GM12878 (cell line): ENCODE measurements at regions of chr3 and their contacts with region 1.

Region 1: GRCh38 chr3:100463002-100463401 is 29.4 kb upstream of the TMEM45A start:
- DNase-seq: peak; percentile 35
- ATAC-seq: peak; percentile 95
- H3K4me3 ChIP-seq: no peak overlapping the region
- H3K27ac ChIP-seq: no peak overlapping the region
- H3K4me1 ChIP-seq: peaks cover 10% of the 10 kb centered on the region
- H3K27me3 ChIP-seq: no peaks in the 10 kb centered on the region
- CTCF ChIP-seq: peak; percentile 65 to 78 (median 71); a peak in 5 of 6 replicates
- EP300 ChIP-seq: no peak
- POLR2A ChIP-seq: no peak
- RAD21 ChIP-seq: peak; percentile 99

Region 2: DNA sequence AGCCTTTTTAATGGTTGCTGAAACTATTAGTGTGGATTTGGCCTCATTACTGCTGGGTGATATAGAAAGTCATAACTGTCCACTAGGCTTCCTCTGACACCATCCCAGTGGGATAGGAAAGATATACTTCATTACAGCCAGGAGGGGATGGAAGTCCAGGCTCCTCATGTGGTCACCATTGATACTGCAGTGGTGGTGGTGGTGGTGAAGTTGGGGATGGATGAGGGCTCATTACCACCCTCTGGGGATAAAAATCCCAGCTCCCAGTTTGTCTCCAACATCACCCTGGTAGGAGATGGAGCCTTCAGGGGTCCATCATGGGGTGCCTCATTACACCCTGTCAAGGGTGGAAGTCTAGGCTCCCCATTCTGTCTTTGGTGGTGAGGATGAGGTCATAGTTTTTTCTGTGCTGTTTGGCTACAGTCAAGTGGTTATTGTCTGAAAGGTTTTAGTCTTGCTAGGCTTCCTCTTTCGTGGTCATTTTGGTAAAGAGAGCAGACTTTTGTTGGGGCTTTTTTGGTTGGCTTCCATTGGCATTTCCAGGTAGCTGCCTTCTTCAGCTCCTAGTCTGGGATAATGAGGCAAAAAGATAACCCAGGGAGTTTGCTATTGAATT is 318.6 kb before region 1 on chr3:
- CTCF ChIA-PET with region 1: no interaction called
- POLR2A ChIA-PET with region 1: no interaction called
- RAD21 ChIA-PET with region 1: no interaction called
- SMC1A ChIA-PET with region 1: no interaction called
- in situ Hi-C with region 1: no loop called
- intact Hi-C with region 1: no loop called
- DNase-seq: peak; percentile 4
- ATAC-seq: peak; percentile 83
- H3K4me3 ChIP-seq: no peak overlapping the region
- H3K27ac ChIP-seq: no peak overlapping the region
- H3K4me1 ChIP-seq: peaks cover 3% of the 10 kb centered on the region; the same call in 1 of the 2 replicates
- H3K27me3 ChIP-seq: no peaks in the 10 kb centered on the region
- CTCF ChIP-seq: no peak
- EP300 ChIP-seq: no peak
- POLR2A ChIP-seq: no peak
- RAD21 ChIP-seq: no peak

Region 3: GRCh38 chr3:100440895-100441294 is 22.1 kb before region 1 on chr3:
- CTCF ChIA-PET with region 1: interaction called, 17 read pairs
- POLR2A ChIA-PET with region 1: no interaction called
- RAD21 ChIA-PET with region 1: interaction called, 3 read pairs
- SMC1A ChIA-PET with region 1: interaction called, 4 read pairs
- in situ Hi-C with region 1: no loop called
- intact Hi-C with region 1: no loop called
- DNase-seq: no peak
- ATAC-seq: no peak
- H3K4me3 ChIP-seq: no peak overlapping the region
- H3K27ac ChIP-seq: no peak overlapping the region
- H3K4me1 ChIP-seq: no peaks in the 10 kb centered on the region
- H3K27me3 ChIP-seq: no peaks in the 10 kb centered on the region
- CTCF ChIP-seq: no peak
- EP300 ChIP-seq: no peak
- POLR2A ChIP-seq: no peak
- RAD21 ChIP-seq: no peak

Region 4: GRCh38 chr3:100521439-100521845 is 58.4 kb after region 1 on chr3:
- CTCF ChIA-PET with region 1: interaction called, 3 read pairs
- POLR2A ChIA-PET with region 1: no interaction called
- RAD21 ChIA-PET with region 1: interaction called, 11 read pairs
- SMC1A ChIA-PET with region 1: interaction called, 5 read pairs
- in situ Hi-C with region 1: no loop called
- intact Hi-C with region 1: no loop called
- DNase-seq: peak; percentile 78
- ATAC-seq: peak; percentile 87
- H3K4me3 ChIP-seq: no peak overlapping the region
- H3K27ac ChIP-seq: no peak overlapping the region
- H3K4me1 ChIP-seq: no peaks in the 10 kb centered on the region; the same call in 1 of the 2 replicates
- H3K27me3 ChIP-seq: no peaks in the 10 kb centered on the region
- CTCF ChIP-seq: no peak
- EP300 ChIP-seq: no peak
- POLR2A ChIP-seq: no peak
- RAD21 ChIP-seq: no peak

Region 5: GRCh38 chr3:100590114-100590839 is 127.3 kb after region 1 on chr3:
- CTCF ChIA-PET with region 1: interaction called, 462 read pairs
- POLR2A ChIA-PET with region 1: interaction called, 3 read pairs
- RAD21 ChIA-PET with region 1: interaction called, 231 read pairs
- SMC1A ChIA-PET with region 1: interaction called, 279 read pairs
- in situ Hi-C with region 1: loop called (anchors 5 kb)
- intact Hi-C with region 1: loop called (anchors 1 kb)
- DNase-seq: peak; percentile 68
- ATAC-seq: peak; percentile 95
- H3K4me3 ChIP-seq: no peak overlapping the region
- H3K27ac ChIP-seq: no peak overlapping the region
- H3K4me1 ChIP-seq: no peaks in the 10 kb centered on the region
- H3K27me3 ChIP-seq: no peaks in the 10 kb centered on the region
- CTCF ChIP-seq: peak; percentile 77 to 91 (median 80); a peak in 5 of 6 replicates
- EP300 ChIP-seq: no peak
- POLR2A ChIP-seq: no peak
- RAD21 ChIP-seq: peak; percentile 95

Region 6: GRCh38 chr3:100641471-100642032 is 178.6 kb after region 1 on chr3:
- CTCF ChIA-PET with region 1: interaction called, 102 read pairs
- POLR2A ChIA-PET with region 1: no interaction called
- RAD21 ChIA-PET with region 1: interaction called, 134 read pairs
- SMC1A ChIA-PET with region 1: interaction called, 145 read pairs
- in situ Hi-C with region 1: no loop called
- intact Hi-C with region 1: no loop called
- DNase-seq: peak; percentile 24
- ATAC-seq: peak; percentile 91
- H3K4me3 ChIP-seq: no peak overlapping the region
- H3K27ac ChIP-seq: no peak overlapping the region
- H3K4me1 ChIP-seq: no peaks in the 10 kb centered on the region
- H3K27me3 ChIP-seq: no peaks in the 10 kb centered on the region
- CTCF ChIP-seq: no peak
- EP300 ChIP-seq: peak; percentile 59 to 64; a peak in 2 of 4 replicates
- POLR2A ChIP-seq: no peak
- RAD21 ChIP-seq: no peak

Region 7: DNA sequence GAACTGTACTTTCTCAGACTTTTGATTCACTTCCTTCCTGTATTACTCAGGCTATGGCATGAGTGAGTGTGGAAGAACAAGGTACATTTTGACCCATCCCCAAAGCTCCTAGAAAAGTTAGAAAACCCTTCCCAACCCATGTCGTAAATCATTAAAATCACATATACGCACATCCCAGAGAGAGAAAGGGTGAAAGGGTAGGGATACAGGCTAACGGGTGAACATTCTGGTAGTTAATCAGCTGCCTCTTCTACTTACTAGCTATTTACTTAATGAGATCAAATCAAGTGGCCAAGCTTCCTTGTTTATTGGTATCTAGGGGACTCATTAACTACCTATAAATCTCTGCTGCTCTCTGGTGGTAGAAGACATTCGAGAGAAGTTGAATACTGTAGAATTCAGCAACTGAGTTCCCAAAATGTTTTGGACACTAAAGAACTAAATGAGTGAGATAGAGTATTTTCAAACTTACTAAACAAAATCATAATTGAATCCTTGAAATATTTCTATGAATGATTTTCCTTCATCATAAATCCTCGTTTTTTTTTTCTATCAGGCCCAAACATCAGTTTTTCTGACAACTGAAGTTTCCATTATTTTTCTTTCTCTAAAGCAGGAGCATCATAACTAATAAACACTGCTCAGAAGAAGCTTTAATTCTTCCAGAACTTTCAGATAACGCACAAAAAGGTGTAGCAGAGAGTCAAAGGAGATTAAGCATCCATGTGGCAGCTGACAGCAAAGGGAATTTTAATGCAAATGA is 733.1 kb after region 1 on chr3:
- CTCF ChIA-PET with region 1: interaction called, 4 read pairs
- POLR2A ChIA-PET with region 1: no interaction called
- RAD21 ChIA-PET with region 1: no interaction called
- SMC1A ChIA-PET with region 1: interaction called, 4 read pairs
- in situ Hi-C with region 1: no loop called
- intact Hi-C with region 1: loop called (anchors 10 kb)
- DNase-seq: no peak
- ATAC-seq: peak; percentile 49; the same call in 2 of the 3 replicates
- H3K4me3 ChIP-seq: no peak overlapping the region
- H3K27ac ChIP-seq: no peak overlapping the region
- H3K4me1 ChIP-seq: no peaks in the 10 kb centered on the region
- H3K27me3 ChIP-seq: no peaks in the 10 kb centered on the region
- CTCF ChIP-seq: peak in 2 of 3 experiments; percentile 13 to 35; a peak in 3 of 6 replicates
- EP300 ChIP-seq: no peak
- POLR2A ChIP-seq: no peak
- RAD21 ChIP-seq: peak; percentile 66